A549 (cell line): ENCODE measurements at regions of chr9 and their contacts with region 1.

Region 1: DNA sequence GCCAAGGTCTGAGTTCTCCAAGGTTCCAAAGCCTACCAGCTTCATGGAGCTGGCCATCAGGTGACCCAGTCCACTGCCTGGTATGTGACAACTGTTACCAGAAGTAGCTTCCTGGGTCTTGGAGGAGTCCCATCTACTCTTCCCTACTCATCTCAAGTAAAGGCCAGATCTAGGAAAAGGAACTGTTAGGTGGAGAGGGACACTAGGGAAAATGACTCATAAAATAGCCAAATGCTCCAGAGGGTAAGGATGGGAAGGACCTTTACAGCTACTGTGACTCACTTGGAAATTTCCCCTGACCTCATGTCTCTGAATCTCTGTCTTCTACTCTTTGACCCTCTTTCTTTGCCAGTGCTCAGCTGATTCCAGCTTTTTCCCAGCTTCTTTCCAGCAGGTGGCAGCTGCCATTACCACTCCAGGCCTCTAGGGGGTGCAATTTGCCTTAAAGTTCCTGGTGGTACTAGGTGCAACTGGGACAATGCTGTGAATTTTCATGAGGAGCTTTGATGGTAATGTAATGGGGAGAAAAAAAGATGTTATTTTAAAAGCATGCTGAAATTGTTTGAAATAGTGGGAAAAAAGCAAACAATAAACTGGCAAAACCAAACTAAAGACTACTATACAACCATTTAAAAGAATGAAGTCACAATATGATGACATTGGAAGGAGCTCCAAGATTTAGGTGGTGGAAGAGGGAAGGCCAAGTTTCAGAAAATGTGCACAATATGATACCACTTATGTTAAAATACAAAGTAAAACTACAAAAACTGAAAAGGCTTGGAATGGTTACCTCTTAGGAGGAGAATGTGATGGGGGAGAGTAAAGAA is 27.1 kb upstream of the MYORG start:
- DNase-seq: peak; percentile 66 to 73
- ATAC-seq: peak; percentile 72 to 87; a peak in 5 of 6 replicates
- H3K4me3 ChIP-seq: no peak overlapping the region
- H3K27ac ChIP-seq: no peak overlapping the region
- H3K4me1 ChIP-seq: 0 out of 3 replicates have a peak, but pooled peaks cover 3% of the 10 kb centered on the region
- CTCF ChIP-seq: peak; percentile 96
- EP300 ChIP-seq: no peak
- POLR2A ChIP-seq: no peak
- RAD21 ChIP-seq: peak; percentile 76 to 87

Region 2: DNA sequence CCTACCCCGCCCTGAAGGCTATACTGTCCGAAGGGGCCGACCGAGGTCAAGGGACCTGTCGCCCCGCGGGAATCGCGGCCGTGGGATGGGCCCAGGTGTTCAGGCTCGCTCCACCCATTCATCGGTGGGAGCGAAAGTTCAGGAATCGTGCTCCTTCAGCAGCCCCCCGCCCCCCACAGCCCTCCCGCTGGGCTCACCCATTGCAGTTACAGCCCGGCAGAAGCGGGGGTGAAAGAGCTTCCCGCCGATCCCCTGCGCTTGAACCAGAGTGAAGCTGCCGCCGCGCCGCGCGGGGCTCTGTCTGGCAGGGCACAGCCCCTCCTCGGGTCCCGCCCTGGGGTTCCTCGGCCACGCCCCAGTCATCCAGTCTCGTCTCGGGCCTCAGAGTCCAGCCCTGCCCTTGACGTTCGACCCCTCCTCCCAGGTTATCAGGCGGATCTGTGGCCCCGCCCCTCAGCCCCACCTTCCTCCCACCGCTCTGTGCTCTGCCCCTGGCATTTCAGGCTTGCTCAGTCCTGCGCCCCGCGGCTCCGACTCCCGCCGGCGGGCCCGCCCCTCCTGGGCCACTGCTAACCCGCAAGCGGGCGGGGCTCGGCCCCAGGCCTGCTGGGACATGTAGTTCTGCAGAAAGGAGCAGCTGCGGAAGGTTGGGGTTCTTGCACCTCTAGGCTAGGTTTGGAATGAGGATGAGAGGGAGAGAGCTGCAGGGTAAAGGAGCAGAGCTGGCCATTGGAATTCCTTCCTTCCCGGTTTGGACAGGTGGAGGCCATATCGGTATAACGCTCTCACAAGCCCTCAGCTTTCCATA is 27.0 kb before region 1 on chr9 and contains the start of gene MYORG:
- CTCF ChIA-PET with region 1: interaction called, 41 read pairs
- POLR2A ChIA-PET with region 1: no interaction called
- DNase-seq: peak; percentile 96 to 98
- ATAC-seq: peak; percentile 78 to 89
- H3K4me3 ChIP-seq: peak within 1 kb of the TSS; percentile 79
- H3K27ac ChIP-seq: peak within 1 kb of the TSS; percentile 63 to 85
- H3K4me1 ChIP-seq: peaks cover 30% of the 10 kb centered on the region
- CTCF ChIP-seq: no peak
- EP300 ChIP-seq: no peak
- POLR2A ChIP-seq: peak; percentile 50
- RAD21 ChIP-seq: no peak
- polyA plus RNA-seq, gene MYORG: 2.2 and 3.7 TPM in 2 replicates

Region 3: DNA sequence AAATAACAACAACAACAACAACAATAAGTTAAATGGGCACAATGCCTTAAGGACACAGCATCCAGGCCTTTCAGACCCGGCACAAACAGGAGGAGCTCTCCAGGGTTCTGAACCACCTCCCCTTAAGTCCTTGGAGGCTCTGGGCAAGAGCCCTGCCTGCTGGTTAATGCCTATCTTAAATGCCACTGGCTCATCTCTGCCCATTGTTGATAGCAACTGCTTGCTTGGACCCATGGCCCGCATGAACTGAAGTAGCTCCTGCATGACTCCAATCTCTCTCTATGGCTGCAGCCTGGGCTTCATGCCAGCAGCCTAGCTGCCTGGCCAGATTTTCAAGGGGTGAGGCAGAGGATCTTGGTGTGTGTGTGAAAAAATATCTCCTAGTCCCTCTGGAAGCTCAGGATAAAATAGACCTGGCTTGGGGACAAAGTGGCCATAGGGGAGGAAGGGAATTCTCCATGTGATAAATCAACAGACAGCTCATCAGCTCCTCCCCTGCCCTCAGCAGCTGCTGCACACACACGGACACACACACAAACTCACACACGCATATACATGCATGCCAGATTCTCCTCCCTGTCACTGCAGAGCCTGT is 27.2 kb after region 1 on chr9:
- CTCF ChIA-PET with region 1: interaction called, 22 read pairs
- POLR2A ChIA-PET with region 1: no interaction called
- DNase-seq: peak; percentile 8 to 49
- ATAC-seq: peak; percentile 63 to 68; a peak in 5 of 6 replicates
- H3K4me3 ChIP-seq: no peak overlapping the region
- H3K27ac ChIP-seq: no peak overlapping the region
- H3K4me1 ChIP-seq: no peaks in the 10 kb centered on the region
- CTCF ChIP-seq: no peak
- EP300 ChIP-seq: no peak
- POLR2A ChIP-seq: no peak
- RAD21 ChIP-seq: no peak

Region 4: DNA sequence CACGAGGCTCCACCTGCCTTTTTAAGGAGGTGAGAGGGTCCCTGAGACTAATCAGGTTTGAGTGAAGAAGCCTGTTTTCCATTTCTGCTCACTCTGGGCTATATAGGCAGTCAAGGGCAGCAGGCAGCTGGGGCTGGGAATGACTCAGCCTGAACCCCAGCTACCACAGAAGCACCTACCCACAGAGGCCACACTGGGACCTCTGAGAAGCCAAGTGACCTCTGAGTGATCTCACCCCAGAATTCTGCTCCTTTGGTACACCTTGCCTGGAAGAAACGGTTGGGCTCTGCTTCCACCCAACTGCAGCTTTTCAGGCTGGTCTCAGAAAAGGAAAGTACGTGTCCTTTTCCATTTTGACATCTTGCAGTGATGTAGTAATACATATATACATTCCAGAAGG is 47.8 kb after region 1 on chr9:
- CTCF ChIA-PET with region 1: interaction called, 18 read pairs
- POLR2A ChIA-PET with region 1: no interaction called
- DNase-seq: no peak
- ATAC-seq: no peak
- H3K4me3 ChIP-seq: no peak overlapping the region
- H3K27ac ChIP-seq: no peak overlapping the region
- H3K4me1 ChIP-seq: peaks cover 7% of the 10 kb centered on the region; the same call in 1 of the 3 replicates
- CTCF ChIP-seq: no peak
- EP300 ChIP-seq: no peak
- POLR2A ChIP-seq: no peak
- RAD21 ChIP-seq: no peak

Region 5: DNA sequence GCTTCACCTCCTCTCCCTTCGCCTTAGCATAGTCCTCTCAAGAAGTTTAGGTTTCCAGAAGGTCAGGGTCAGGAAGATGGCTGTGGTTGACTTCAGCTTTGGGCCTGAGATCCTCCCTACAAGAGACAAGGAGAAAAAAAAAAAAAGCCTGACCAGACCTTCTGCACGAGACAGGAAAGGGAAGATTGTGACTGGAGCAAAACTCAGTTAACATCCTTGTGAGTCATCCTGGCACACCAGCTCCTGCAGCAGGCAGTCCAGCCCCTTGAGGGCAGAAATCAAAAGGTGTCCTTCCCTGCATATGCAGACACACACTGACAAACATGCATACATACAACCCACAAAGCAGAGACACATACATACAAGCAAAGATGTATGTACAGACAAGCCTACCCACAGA is 137.1 kb after region 1 on chr9:
- CTCF ChIA-PET with region 1: interaction called, 13 read pairs
- POLR2A ChIA-PET with region 1: no interaction called
- DNase-seq: peak in 1 of 2 experiments; percentile 45
- ATAC-seq: peak; percentile 80 to 83
- H3K4me3 ChIP-seq: no peak overlapping the region
- H3K27ac ChIP-seq: no peak overlapping the region
- H3K4me1 ChIP-seq: peaks cover 12% of the 10 kb centered on the region; the same call in 1 of the 3 replicates
- CTCF ChIP-seq: no peak
- EP300 ChIP-seq: no peak
- POLR2A ChIP-seq: no peak
- RAD21 ChIP-seq: no peak

Region 6: GRCh38 chr9:34603610-34604231 is 200.0 kb after region 1 on chr9:
- CTCF ChIA-PET with region 1: interaction called, 35 read pairs
- POLR2A ChIA-PET with region 1: no interaction called
- DNase-seq: peak; percentile 71 to 94
- ATAC-seq: peak; percentile 82 to 96
- H3K4me3 ChIP-seq: no peak overlapping the region
- H3K27ac ChIP-seq: no peak overlapping the region
- H3K4me1 ChIP-seq: peaks cover 5% of the 10 kb centered on the region; the same call in 1 of the 3 replicates
- CTCF ChIP-seq: peak; percentile 95
- EP300 ChIP-seq: no peak
- POLR2A ChIP-seq: no peak
- RAD21 ChIP-seq: peak; percentile 88 to 96